ENCODE measurements at regions of chr5 and their contacts with region 1.

Region 1: GRCh38 chr5:110738812-110739651 is at the start of gene SLC25A46:
- DNase-seq: peak; percentile 86
- H3K4me3 Mint-ChIP-seq: peak within 1 kb of the TSS; percentile 97
- H3K27ac Mint-ChIP-seq: peak within 1 kb of the TSS; percentile 92
- H3K4me1 Mint-ChIP-seq: peaks cover 28% of the 10 kb centered on the region
- H3K27me3 Mint-ChIP-seq: peaks cover 11% of the 10 kb centered on the region
- total RNA-seq, gene SLC25A46: 44.0 and 44.8 TPM in 2 replicates

Region 2: DNA sequence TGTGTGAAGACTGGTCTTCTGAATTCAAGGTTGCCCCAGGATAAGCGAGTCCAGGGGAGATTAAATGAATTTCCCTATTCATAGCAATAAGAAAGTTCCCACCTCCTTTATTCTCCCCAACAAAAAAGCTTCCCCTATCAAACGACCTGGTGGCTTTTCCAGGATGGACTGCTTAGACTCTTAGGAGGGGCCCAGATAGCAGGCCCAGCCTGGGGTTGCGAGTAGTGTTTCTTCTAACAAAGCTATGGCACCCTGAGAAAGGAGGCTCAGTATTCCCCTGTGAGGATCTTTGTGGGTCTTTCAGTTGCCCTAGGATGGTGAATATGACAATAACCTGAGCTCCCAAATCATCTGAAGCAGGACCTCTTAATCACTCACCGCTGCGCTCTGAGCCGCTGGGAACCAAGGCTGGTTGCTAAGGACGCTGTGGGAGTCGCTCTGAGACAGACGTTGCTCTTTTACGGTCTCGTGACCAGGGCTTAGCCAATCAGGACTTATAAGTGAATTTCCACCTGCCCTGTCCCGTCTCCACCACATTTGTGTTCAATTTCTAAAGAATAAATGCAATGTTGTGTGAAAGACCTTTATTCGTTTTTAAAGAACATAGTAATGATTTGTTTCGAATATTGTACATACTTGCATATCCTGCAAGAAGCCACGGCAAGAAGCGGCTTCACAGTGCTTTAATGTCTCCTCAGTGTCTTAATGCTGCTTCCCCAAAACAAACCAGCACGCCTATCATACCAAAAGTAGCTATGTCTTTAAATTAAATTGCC is 12.6 kb before region 1 on chr5 and contains the start of gene TMEM232:
- intact Hi-C with region 1: loop called (anchors 1 kb)
- DNase-seq: peak; percentile 64
- H3K4me3 Mint-ChIP-seq: peak within 1 kb of the TSS; percentile 85
- H3K27ac Mint-ChIP-seq: peak within 1 kb of the TSS; percentile 71
- H3K4me1 Mint-ChIP-seq: peaks cover 5% of the 10 kb centered on the region
- H3K27me3 Mint-ChIP-seq: peaks cover 2% of the 10 kb centered on the region
- total RNA-seq, gene TMEM232: 0.80 and 1.1 TPM in 2 replicates

Region 3: GRCh38 chr5:110751902-110752762 is 13.1 kb after region 1 on chr5:
- intact Hi-C with region 1: loop called (anchors 1 kb)
- DNase-seq: peak; percentile 37
- H3K4me3 Mint-ChIP-seq: peak overlapping the region; percentile 60
- H3K27ac Mint-ChIP-seq: peak overlapping the region; percentile 81
- H3K4me1 Mint-ChIP-seq: peaks cover 48% of the 10 kb centered on the region
- H3K27me3 Mint-ChIP-seq: no peaks in the 10 kb centered on the region

Region 4: GRCh38 chr5:112419986-112420864 is 1681.2 kb after region 1 on chr5:
- intact Hi-C with region 1: loop called (anchors 10 kb)
- DNase-seq: peak; percentile 22
- H3K4me3 Mint-ChIP-seq: peak overlapping the region; percentile 23
- H3K27ac Mint-ChIP-seq: no peak overlapping the region
- H3K4me1 Mint-ChIP-seq: peaks cover 11% of the 10 kb centered on the region
- H3K27me3 Mint-ChIP-seq: peaks cover 52% of the 10 kb centered on the region